Gastrocnemius medialis (tissue), 4 donors: ENCODE measurements at regions of chr18 and their contacts with region 1.

Region 1: DNA sequence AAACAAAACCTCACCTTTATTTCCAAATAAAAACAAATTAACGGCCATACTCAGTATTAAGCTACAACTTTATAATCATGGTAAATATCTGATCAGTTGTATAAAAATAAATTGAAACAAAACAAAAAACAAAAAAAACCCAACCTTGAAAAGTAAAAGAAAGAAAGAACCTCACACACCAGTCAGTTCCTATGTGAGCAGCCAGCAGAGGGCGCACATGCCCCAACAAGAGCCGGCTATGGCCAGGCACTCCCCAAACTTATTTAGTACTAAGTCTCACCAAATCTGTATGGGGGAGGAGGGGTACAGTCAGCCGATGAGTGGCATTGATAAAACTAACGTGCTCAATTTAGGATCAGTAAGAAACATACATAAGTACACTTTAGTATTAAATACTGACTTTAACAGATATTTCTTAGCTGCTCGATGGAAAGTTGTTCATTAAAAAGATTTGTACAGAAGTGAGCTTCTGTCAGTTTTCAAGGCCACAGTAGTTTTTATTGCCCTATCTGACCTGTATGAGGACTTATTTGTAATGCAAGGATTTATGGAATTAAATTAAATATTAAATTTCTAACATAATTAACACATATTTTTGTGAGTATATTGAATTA is 172.6 kb downstream of the TCF4 start:
- DNase-seq: peak; percentile 73 to 80
- ATAC-seq: peak; percentile 77 to 81
- H3K4me3 ChIP-seq: no peak overlapping the region
- H3K27ac ChIP-seq: peak overlapping the region; percentile 11 to 92 (median 89)
- H3K4me1 ChIP-seq: peaks cover 60 to 69% of the 10 kb centered on the region in 2 donors
- H3K27me3 ChIP-seq: no peaks in the 10 kb centered on the region
- CTCF ChIP-seq: peak; percentile 77 to 95 (median 87)
- POLR2A ChIP-seq: no peak

Region 2: GRCh38 chr18:55322178-55322735 is 93.1 kb before region 1 on chr18:
- in situ Hi-C with region 1: loop called in 2 of 4 experiments (anchors 5 to 25 kb)
- intact Hi-C with region 1: loop called (anchors 1 kb)
- DNase-seq: peak; percentile 77 to 90
- ATAC-seq: peak; percentile 88 to 90
- H3K4me3 ChIP-seq: peak overlapping the region; percentile 57 to 82 (median 73)
- H3K27ac ChIP-seq: peak overlapping the region; percentile 93 to 95 (median 94)
- H3K4me1 ChIP-seq: peaks cover 53 to 54% of the 10 kb centered on the region in 2 donors
- H3K27me3 ChIP-seq: no peaks in the 10 kb centered on the region
- CTCF ChIP-seq: peak in 2 of 5 experiments; percentile 12 to 17
- POLR2A ChIP-seq: peak; percentile 68 to 84

Region 3: GRCh38 chr18:55582325-55582724 is 167.0 kb after region 1 on chr18:
- in situ Hi-C with region 1: loop called (anchors 5 to 10 kb)
- intact Hi-C with region 1: no loop called
- DNase-seq: no peak
- ATAC-seq: no peak
- H3K4me3 ChIP-seq: peak overlapping the region in 3 of 4 donors; percentile 3 to 86 (median 39)
- H3K27ac ChIP-seq: peak overlapping the region; percentile 88 to 93 (median 91)
- H3K4me1 ChIP-seq: peaks cover 73 to 79% of the 10 kb centered on the region in 2 donors
- H3K27me3 ChIP-seq: no peaks in the 10 kb centered on the region
- CTCF ChIP-seq: no peak
- POLR2A ChIP-seq: no peak

Region 4: DNA sequence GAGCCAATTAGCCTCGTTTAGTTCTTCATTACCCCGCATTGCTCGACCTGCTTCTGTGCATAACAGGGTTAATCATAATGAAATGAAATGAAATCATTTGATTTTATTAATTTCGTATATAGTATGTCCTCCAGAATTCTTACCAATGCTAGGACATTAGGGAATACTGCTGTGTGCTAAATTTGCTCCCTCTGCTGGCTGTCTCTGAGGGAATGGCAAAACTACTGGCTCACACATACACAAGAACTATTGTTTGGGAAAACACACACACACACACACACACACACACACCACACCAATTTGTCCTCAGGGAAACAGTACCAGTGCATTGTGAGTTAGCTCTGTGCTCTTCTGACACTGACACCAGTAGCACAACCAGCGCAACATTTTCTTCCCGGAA is 445.9 kb after region 1 on chr18:
- in situ Hi-C with region 1: loop called in 1 of 4 experiments (anchors 10 kb)
- intact Hi-C with region 1: loop called (anchors 5 kb)
- DNase-seq: no peak
- ATAC-seq: peak in 1 of 2 donors; percentile 33
- H3K4me3 ChIP-seq: no peak overlapping the region
- H3K27ac ChIP-seq: no peak overlapping the region
- H3K4me1 ChIP-seq: peaks cover 3 to 10% of the 10 kb centered on the region in 2 donors
- H3K27me3 ChIP-seq: peaks cover 40 to 53% (median 51%) of the 10 kb centered on the region in 3 donors
- CTCF ChIP-seq: peak in 3 of 5 experiments; percentile 20 to 32 (median 22)
- POLR2A ChIP-seq: no peak